Panc1 (cell line): ENCODE measurements at regions of chr1 and their contacts with region 1.

Region 1: GRCh38 chr1:87292684-87293493 is 35.8 kb upstream of the LMO4 start:
- DNase-seq: peak; percentile 36
- ATAC-seq: peak; percentile 88
- H3K4me3 ChIP-seq: no peak overlapping the region
- H3K27ac ChIP-seq: no peak overlapping the region
- H3K4me1 ChIP-seq: no peaks in the 10 kb centered on the region
- H3K27me3 ChIP-seq: no peaks in the 10 kb centered on the region
- CTCF ChIP-seq: peak; percentile 84

Region 2: GRCh38 chr1:87840767-87841166 is 547.9 kb after region 1 on chr1:
- CTCF ChIA-PET with region 1: no interaction called
- POLR2A ChIA-PET with region 1: no interaction called
- in situ Hi-C with region 1: no loop called
- intact Hi-C with region 1: no loop called
- DNase-seq: no peak
- ATAC-seq: no peak
- H3K4me3 ChIP-seq: no peak overlapping the region
- H3K27ac ChIP-seq: no peak overlapping the region
- H3K4me1 ChIP-seq: no peaks in the 10 kb centered on the region
- H3K27me3 ChIP-seq: no peaks in the 10 kb centered on the region
- CTCF ChIP-seq: no peak

Region 3: GRCh38 chr1:87953732-87954344 is 660.9 kb after region 1 on chr1:
- CTCF ChIA-PET with region 1: no interaction called
- POLR2A ChIA-PET with region 1: no interaction called
- in situ Hi-C with region 1: no loop called
- intact Hi-C with region 1: loop called (anchors 10 kb)
- DNase-seq: peak; percentile 35
- ATAC-seq: peak; percentile 55; the same call in 1 of the 2 replicates
- H3K4me3 ChIP-seq: no peak overlapping the region
- H3K27ac ChIP-seq: no peak overlapping the region
- H3K4me1 ChIP-seq: no peaks in the 10 kb centered on the region
- H3K27me3 ChIP-seq: no peaks in the 10 kb centered on the region
- CTCF ChIP-seq: peak; percentile 77

Region 4: GRCh38 chr1:88061492-88062177 is 768.7 kb after region 1 on chr1:
- CTCF ChIA-PET with region 1: no interaction called
- POLR2A ChIA-PET with region 1: no interaction called
- in situ Hi-C with region 1: no loop called
- intact Hi-C with region 1: loop called (anchors 1 kb)
- DNase-seq: peak; percentile 41
- ATAC-seq: peak; percentile 85
- H3K4me3 ChIP-seq: no peak overlapping the region
- H3K27ac ChIP-seq: no peak overlapping the region
- H3K4me1 ChIP-seq: no peaks in the 10 kb centered on the region
- H3K27me3 ChIP-seq: no peaks in the 10 kb centered on the region
- CTCF ChIP-seq: peak; percentile 67

Region 5: DNA sequence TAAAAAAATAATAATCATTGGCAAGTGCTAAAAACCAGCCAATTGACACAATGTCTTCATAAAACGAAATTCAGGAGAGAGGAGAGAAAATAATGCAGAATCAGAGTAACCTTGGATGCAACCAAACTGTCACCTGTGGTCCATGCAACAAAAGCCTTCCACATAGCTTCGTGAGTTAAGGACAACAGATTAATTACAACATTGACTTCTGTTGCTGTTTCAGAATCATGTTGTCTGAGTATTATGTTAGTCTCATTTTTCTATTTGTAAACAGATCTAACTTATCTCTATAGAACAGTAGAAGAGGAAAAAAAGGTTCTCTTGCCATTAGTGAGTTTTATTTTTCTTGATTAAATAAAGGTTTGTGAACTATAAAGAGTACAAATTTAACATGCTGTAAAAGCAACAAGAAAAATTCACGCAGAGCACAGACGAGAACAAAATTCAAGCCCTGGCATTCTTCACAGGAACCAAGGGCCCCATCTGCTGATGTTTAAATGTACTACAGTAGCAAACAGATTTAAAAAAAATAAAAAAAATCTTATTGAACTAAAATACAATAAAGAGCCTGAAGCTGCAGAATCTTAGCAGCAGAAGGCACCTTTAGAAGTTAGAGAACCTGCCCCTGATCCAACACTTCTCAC is 1010.1 kb after region 1 on chr1:
- CTCF ChIA-PET with region 1: no interaction called
- POLR2A ChIA-PET with region 1: no interaction called
- in situ Hi-C with region 1: no loop called
- intact Hi-C with region 1: loop called (anchors 10 kb)
- DNase-seq: peak; percentile 5
- ATAC-seq: no peak
- H3K4me3 ChIP-seq: no peak overlapping the region
- H3K27ac ChIP-seq: no peak overlapping the region
- H3K4me1 ChIP-seq: no peaks in the 10 kb centered on the region
- H3K27me3 ChIP-seq: no peaks in the 10 kb centered on the region; the same call in 1 of the 2 replicates
- CTCF ChIP-seq: peak; percentile 63